ENCODE measurements at regions of chr15 and their contacts with region 1.

Region 1: DNA sequence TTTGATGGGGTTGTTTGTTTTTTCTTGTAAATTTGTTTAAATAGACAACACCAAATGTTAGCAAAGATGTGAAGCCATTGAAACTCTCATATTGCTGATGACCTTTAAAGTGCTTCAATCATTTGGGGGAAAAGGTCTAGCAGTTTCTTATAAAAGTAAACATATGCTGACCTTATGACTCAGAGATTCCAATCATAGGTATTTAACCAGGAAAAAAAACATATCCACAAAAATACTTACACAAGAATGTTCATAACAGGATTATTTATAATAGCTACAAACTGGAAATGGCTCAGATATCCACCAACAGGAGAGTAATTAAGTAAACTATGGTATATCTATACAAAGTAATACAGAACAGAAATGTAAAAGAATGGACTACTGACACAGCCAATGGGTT is 27.1 kb upstream of the RORA start:
- DNase-seq: no peak
- ATAC-seq: no peak

Region 2: GRCh38 chr15:61309031-61309511 is 52.9 kb after region 1 on chr15:
- intact Hi-C with region 1: no loop called
- DNase-seq: no peak
- ATAC-seq: no peak

Region 3: DNA sequence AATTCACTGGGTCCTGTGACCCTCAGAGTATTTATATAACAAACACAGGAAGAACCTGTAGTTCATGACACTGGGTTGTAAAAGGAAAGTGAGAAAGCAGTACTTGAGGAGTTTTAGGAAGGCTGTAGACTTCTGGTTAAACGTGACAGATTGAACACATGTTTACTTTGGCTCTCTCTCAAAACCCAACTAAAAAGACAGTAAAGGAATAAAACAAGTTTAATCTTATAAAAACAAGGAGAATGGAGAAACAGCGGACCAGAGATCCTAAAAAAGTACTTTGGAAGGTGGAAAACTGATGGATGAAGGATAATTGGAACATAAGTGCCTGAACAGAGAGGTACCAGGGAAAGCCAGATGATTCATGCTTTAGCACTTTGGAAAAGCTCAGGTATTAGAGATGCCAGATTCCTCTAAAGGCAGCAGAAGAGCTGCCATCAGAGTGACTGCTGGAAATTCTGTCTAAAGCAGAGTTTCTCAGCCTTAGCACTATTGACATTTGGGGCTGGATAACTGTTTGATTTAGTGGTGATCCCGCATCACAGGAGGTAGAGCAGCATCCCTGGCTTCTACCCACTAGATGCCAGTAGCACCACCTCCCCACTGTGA is 155.8 kb after region 1 on chr15:
- intact Hi-C with region 1: no loop called
- DNase-seq: no peak
- ATAC-seq: no peak

Region 4: DNA sequence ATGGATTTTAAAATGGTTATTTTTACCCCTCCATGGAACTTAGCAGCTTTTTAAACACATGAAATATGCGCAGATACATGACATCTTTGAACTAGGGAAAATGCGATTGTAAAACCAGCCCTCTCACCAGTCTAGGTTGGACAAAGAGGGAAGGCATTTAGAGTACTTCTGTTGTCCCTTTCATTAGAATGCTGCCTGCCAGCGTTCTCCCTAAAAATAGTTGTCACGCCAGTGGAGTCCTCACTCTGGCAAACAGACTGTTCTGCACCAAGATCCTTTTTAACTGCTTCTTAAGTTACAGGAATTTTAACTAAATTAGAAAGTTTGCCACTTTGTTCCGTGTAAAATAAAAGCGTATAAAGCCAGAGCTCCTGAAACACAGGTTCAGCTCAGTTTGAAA is 508.8 kb after region 1 on chr15:
- intact Hi-C with region 1: loop called (anchors 5 kb)
- DNase-seq: no peak
- ATAC-seq: peak; percentile 48

Measured in Right ventricle myocardium inferior (tissue), 1 donor.